Activated CD8-positive, alpha-beta T cell treated with anti-CD3 and anti-CD28 coated beads, Interleukin-2, amount 10 ng/mL, durations not matched to agents 7 days and 5 days (primary cell): ENCODE measurements at regions of chr11 and their contacts with region 1.

Region 1: DNA sequence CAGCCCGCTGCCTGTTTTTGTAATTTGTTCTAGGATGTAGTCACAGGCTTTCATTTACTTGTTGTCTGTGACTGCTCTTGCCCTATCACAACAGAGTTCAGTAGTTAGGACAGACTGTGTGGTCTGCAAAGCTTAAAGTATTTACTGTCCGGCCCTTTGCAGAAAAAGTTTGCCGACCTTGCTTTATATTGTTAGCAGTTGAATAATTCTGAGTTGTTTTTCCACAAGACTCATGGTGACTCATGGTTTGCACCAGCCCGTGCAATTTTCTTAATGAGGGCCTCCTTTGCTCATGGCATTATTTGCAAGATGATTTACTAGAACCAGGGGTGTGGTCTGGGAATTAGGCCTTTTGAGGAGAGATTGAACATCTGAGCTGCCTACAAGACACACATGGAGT is 110.6 kb downstream of the SCN3B start:
- DNase-seq: no peak
- ATAC-seq: no peak
- H3K4me3 Mint-ChIP-seq: no peak overlapping the region
- H3K27ac Mint-ChIP-seq: no peak overlapping the region
- H3K4me1 Mint-ChIP-seq: no peaks in the 10 kb centered on the region
- H3K27me3 Mint-ChIP-seq: no peaks in the 10 kb centered on the region

Region 2: GRCh38 chr11:123494195-123495050 is 49.4 kb before region 1 on chr11:
- CTCF ChIA-PET with region 1: no interaction called
- POLR2A ChIA-PET with region 1: no interaction called
- DNase-seq: no peak
- ATAC-seq: no peak
- H3K4me3 Mint-ChIP-seq: no peak overlapping the region
- H3K27ac Mint-ChIP-seq: no peak overlapping the region
- H3K4me1 Mint-ChIP-seq: peaks cover 15% of the 10 kb centered on the region
- H3K27me3 Mint-ChIP-seq: no peaks in the 10 kb centered on the region

Region 3: GRCh38 chr11:123560006-123560405 is 16.2 kb after region 1 on chr11:
- CTCF ChIA-PET with region 1: interaction called, 16 read pairs
- POLR2A ChIA-PET with region 1: no interaction called
- DNase-seq: peak; percentile 52
- ATAC-seq: peak; percentile 79
- H3K4me3 Mint-ChIP-seq: peak overlapping the region; percentile 32
- H3K27ac Mint-ChIP-seq: peak overlapping the region; percentile 31
- H3K4me1 Mint-ChIP-seq: peaks cover 12% of the 10 kb centered on the region
- H3K27me3 Mint-ChIP-seq: peaks cover 2% of the 10 kb centered on the region

Region 4: DNA sequence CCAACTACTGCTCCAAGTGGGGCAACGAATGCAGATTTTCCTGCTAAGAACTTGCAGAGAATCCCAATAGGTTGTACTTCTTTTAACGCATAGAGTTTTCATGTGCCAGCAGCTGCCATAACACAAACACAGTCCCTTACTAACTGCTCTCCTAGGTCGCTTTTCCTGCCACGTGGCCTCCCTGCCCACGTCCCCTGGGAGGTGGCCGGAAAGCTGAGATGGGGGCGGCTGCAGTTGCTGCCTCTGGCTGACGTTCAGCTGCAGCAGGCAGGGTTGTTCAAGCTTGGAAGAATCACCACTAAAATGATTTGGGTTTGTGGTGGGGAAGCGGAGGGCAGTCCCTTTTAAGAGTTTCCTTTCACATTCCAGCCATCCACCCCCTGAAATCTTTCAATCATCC is 158.3 kb after region 1 on chr11:
- CTCF ChIA-PET with region 1: no interaction called
- POLR2A ChIA-PET with region 1: no interaction called
- DNase-seq: no peak
- ATAC-seq: no peak
- H3K4me3 Mint-ChIP-seq: no peak overlapping the region
- H3K27ac Mint-ChIP-seq: no peak overlapping the region
- H3K4me1 Mint-ChIP-seq: no peaks in the 10 kb centered on the region
- H3K27me3 Mint-ChIP-seq: peaks cover 11% of the 10 kb centered on the region